ENCODE measurements at regions of chr5 and their contacts with region 1.

Region 1: DNA sequence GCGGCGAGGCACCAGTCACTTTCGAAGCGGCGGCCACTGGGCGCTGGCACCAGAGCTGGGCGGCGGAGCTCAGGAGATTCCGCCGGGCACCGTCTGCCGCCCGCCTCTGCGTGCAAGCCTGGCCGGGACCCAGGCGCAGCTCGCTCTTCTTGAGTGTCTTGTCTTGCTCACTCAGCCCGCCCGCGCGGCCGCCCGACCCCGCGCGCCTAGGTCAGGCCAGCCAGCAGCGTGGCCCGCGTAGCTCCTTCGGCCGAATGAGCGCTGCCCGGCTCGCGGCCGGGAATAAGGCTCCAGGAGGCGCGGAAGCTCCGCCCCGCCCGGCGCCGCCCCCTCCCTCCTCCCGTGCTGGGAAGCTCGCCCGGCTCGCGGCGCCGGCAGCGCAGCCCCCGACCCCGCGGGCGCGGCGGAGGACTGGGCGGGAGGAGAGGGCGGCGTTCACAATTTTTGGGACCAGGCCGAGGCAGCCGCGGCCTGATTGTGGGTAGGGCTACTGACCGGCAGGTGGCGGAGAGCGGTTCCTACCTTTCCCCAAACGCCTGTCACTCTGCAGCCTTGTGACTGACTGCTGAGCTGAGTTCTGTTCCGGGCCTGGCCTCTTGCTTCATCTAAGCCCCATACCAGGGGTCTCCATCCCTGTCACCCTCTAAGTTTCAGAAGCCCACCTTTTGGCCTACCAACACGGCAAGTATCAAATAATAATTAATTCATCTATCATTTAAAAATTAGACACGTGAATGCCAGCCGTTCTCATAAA is at the start of gene HBEGF:
- DNase-seq: peak; percentile 84
- H3K4me3 ChIP-seq: peak within 1 kb of the TSS; percentile 69
- H3K27ac ChIP-seq: peak within 1 kb of the TSS; percentile 27
- H3K4me1 ChIP-seq: peaks cover 73% of the 10 kb centered on the region
- CTCF ChIP-seq: peak; percentile 75
- total RNA-seq, gene HBEGF: 4.7 and 5.6 TPM in 2 replicates

Region 2: GRCh38 chr5:140107312-140108083 is 239.0 kb before region 1 on chr5:
- CTCF ChIA-PET with region 1: no interaction called
- POLR2A ChIA-PET with region 1: no interaction called
- intact Hi-C with region 1: loop called (anchors 5 kb)
- DNase-seq: peak; percentile 95
- H3K4me3 ChIP-seq: peak overlapping the region; percentile 96
- H3K27ac ChIP-seq: peak overlapping the region; percentile 78
- H3K4me1 ChIP-seq: peaks cover 47% of the 10 kb centered on the region
- CTCF ChIP-seq: 0 out of 2 replicates have a peak, but pooled peaks have one; percentile 17

Region 3: GRCh38 chr5:140251527-140251973 is 95.0 kb before region 1 on chr5:
- CTCF ChIA-PET with region 1: interaction called, 99 read pairs
- POLR2A ChIA-PET with region 1: interaction called, 58 read pairs
- intact Hi-C with region 1: no loop called
- DNase-seq: peak; percentile 64
- H3K4me3 ChIP-seq: no peak overlapping the region
- H3K27ac ChIP-seq: peak overlapping the region; percentile 43
- H3K4me1 ChIP-seq: peaks cover 48% of the 10 kb centered on the region
- CTCF ChIP-seq: no peak

Region 4: GRCh38 chr5:140287801-140288521 is 58.6 kb before region 1 on chr5:
- CTCF ChIA-PET with region 1: interaction called, 11 read pairs
- POLR2A ChIA-PET with region 1: interaction called, 17 read pairs
- intact Hi-C with region 1: loop called (anchors 5 kb)
- DNase-seq: no peak
- H3K4me3 ChIP-seq: no peak overlapping the region
- H3K27ac ChIP-seq: no peak overlapping the region
- H3K4me1 ChIP-seq: peaks cover 55% of the 10 kb centered on the region
- CTCF ChIP-seq: no peak

Region 5: GRCh38 chr5:140302786-140303639 is 43.5 kb before region 1 on chr5 and contains the start of gene PFDN1:
- CTCF ChIA-PET with region 1: no interaction called
- POLR2A ChIA-PET with region 1: interaction called, 8 read pairs
- intact Hi-C with region 1: loop called (anchors 2 kb)
- DNase-seq: peak; percentile 98
- H3K4me3 ChIP-seq: peak within 1 kb of the TSS; percentile 98
- H3K27ac ChIP-seq: peak within 1 kb of the TSS; percentile 26
- H3K4me1 ChIP-seq: peaks cover 18% of the 10 kb centered on the region
- CTCF ChIP-seq: no peak
- total RNA-seq, gene PFDN1: 36.6 and 51.3 TPM in 2 replicates

Measured in OCI-LY7 (cell line).